IMR-90 (cell line): ENCODE measurements at regions of chr17 and their contacts with region 1.

Region 1: DNA sequence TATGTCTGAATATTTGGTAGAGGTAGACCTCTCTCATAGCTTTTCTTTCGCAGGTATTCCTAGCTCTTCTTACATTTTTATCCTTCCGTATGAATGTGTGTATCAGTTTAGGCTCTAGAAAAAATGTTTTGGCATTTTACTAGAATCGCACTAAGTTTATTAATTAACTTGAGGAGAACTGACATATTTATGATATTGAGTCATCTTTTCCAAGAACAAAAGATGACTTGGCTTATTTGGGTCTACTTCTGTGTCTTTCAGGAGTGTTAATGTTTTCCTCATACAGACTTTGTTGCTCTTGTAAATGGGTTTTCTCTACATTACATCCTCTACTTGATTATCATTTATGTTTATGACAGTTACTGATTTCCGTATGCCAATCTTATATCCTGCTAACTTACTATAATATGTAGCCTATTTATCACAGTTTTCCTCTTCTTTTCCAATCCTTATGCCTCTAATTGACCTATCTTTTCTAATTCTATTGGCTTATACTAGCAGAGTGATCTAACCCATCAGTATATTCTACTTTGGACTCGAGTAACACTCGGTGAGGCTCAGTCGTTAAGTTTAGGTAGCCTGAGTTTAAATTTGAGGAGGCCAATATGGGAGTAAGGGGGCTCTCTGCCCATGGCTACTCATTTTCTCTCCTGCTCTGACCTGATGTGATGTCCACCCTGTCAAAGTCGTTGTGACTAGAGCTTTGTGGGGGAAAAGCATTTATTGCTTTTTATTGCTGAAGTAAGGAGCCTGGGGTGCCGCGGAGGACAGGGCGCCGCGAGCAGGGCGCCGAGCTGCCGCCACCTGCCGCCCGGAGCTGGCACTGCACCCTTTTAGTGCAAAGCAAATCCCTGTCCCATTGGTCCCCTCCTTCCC is 20.0 kb downstream of the ST6GALNAC1 start:
- DNase-seq: peak; percentile 60
- ATAC-seq: peak; percentile 100
- H3K4me3 ChIP-seq: no peak overlapping the region
- H3K27ac ChIP-seq: no peak overlapping the region
- H3K4me1 ChIP-seq: peaks cover 2% of the 10 kb centered on the region; the same call in 1 of the 2 replicates
- H3K27me3 ChIP-seq: peaks cover 17% of the 10 kb centered on the region
- CTCF ChIP-seq: peak; percentile 94
- POLR2A ChIP-seq: no peak
- RAD21 ChIP-seq: peak; percentile 92

Region 2: DNA sequence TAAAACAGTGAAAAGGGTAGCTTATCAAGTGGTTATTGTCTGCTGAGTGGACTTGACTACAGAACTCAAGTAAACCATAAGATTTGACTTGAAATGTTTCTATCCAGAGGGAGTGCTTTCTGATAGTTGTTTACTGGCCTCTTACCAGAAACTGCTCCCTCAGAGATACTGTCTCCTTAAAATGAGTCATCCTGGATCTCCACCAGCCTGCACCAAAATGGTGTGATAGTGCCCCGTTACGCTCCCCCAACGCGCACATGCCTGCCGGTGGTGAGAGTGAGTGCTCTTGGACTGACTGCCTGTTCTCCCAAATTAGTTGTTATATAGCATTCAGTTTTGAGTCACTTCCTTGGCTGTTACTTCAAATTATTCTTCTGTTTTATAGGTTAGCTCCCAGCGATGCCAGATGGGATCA is 60.8 kb before region 1 on chr17:
- CTCF ChIA-PET with region 1: interaction called, 19 read pairs
- POLR2A ChIA-PET with region 1: no interaction called
- dilution Hi-C with region 1: no loop called
- in situ Hi-C with region 1: no loop called
- intact Hi-C with region 1: loop called (anchors 1 kb)
- DNase-seq: peak; percentile 92
- ATAC-seq: peak; percentile 69
- H3K4me3 ChIP-seq: no peak overlapping the region
- H3K27ac ChIP-seq: no peak overlapping the region
- H3K4me1 ChIP-seq: peaks cover 17% of the 10 kb centered on the region
- H3K27me3 ChIP-seq: no peaks in the 10 kb centered on the region
- CTCF ChIP-seq: 0 out of 2 replicates have a peak, but pooled peaks have one; percentile 0
- POLR2A ChIP-seq: peak; percentile 27; the same call in 1 of the 2 replicates
- RAD21 ChIP-seq: no peak